ENCODE measurements at regions of chr12 and their contacts with region 1.

Region 1: GRCh38 chr12:38316391-38317129 is at the start of gene ALG10B:
- DNase-seq: peak; percentile 62 to 87 (median 73)
- ATAC-seq: peak; percentile 100
- H3K4me3 ChIP-seq: peak within 1 kb of the TSS; percentile 52
- H3K27ac ChIP-seq: peak within 1 kb of the TSS; percentile 64; the same call in 2 of the 3 replicates
- H3K4me1 ChIP-seq: no peaks in the 10 kb centered on the region
- H3K27me3 ChIP-seq: no peaks in the 10 kb centered on the region
- CTCF ChIP-seq: peak; percentile 30 to 71 (median 55); a peak in 5 of 6 replicates
- EP300 ChIP-seq: no peak
- POLR2A ChIP-seq: no peak
- RAD21 ChIP-seq: no peak
- polyA plus RNA-seq, gene ALG10B: 0.34 to 0.46 TPM

Region 2: GRCh38 chr12:38053655-38054464 is 262.7 kb before region 1 on chr12:
- CTCF ChIA-PET with region 1: no interaction called
- POLR2A ChIA-PET with region 1: no interaction called
- in situ Hi-C with region 1: no loop called
- intact Hi-C with region 1: loop called (anchors 5 kb)
- DNase-seq: peak; percentile 17 to 58 (median 20)
- ATAC-seq: peak; percentile 47
- H3K4me3 ChIP-seq: no peak overlapping the region
- H3K27ac ChIP-seq: no peak overlapping the region
- H3K4me1 ChIP-seq: no peaks in the 10 kb centered on the region
- H3K27me3 ChIP-seq: no peaks in the 10 kb centered on the region
- CTCF ChIP-seq: peak; percentile 32 to 40 (median 40); a peak in 4 of 6 replicates
- EP300 ChIP-seq: no peak
- POLR2A ChIP-seq: no peak
- RAD21 ChIP-seq: peak in 1 of 2 experiments; percentile 49; a peak in 3 of 4 replicates

Region 3: DNA sequence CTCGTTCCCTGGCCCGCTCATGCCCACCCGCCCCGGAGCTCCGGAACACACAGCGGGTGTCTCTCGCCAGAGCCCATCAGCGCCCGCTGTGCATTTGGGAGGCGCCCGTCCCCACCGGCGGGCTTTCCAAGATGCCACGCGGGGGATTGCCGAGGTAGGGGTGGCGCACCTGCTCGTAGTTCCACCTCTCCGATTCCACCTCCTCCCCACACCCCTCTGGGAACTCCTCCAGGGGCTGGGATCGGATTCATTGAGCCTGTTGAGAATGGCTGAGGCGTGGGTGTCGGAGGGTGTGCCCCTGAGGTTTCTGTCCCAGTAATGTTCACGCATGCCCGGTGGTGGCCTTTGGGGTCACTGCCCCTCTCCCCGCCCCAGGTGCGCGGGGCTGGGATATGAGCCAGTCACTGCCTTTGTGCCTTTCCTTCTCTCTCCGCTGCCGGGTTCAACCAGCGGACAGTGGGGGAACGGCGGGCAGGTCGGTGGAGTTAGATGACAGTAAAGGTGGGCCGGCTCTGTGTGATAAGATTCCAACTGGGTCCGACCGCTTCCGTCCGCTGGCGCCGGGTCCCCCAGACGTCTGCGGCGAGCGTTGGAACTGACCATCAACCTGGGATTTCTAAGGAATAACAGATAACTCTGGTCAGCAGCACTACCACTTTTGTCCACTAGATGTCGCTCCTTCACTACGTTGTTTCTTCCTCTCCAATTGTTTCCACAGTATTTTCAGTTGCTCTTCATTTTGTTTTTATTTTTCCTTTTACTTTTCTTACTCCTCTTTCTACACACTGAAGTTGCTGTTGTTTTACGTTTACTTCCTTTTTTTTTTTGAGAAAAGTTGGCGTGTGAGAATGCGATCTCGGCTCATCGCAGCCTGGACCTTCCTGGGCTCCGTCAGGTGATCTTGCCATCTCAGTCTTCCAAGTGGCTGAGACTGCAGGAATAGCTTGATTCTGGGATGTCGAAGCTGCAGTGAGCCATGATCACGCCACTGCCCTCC is 178.0 kb before region 1 on chr12:
- CTCF ChIA-PET with region 1: interaction called, 3 read pairs
- POLR2A ChIA-PET with region 1: no interaction called
- in situ Hi-C with region 1: no loop called
- intact Hi-C with region 1: loop called (anchors 1 kb)
- DNase-seq: peak; percentile 49 to 63 (median 53)
- ATAC-seq: peak; percentile 81
- H3K4me3 ChIP-seq: no peak overlapping the region
- H3K27ac ChIP-seq: no peak overlapping the region
- H3K4me1 ChIP-seq: peaks cover 0 to 4% of the 10 kb centered on the region in 2 experiments; a peak in 2 of 5 replicates
- H3K27me3 ChIP-seq: no peaks in the 10 kb centered on the region
- CTCF ChIP-seq: peak; percentile 57 to 90 (median 88)
- EP300 ChIP-seq: no peak
- POLR2A ChIP-seq: no peak
- RAD21 ChIP-seq: peak; percentile 42 to 73; a peak in 3 of 4 replicates

Region 4: GRCh38 chr12:38269897-38270296 is 46.7 kb before region 1 on chr12:
- CTCF ChIA-PET with region 1: no interaction called
- POLR2A ChIA-PET with region 1: no interaction called
- in situ Hi-C with region 1: no loop called
- intact Hi-C with region 1: no loop called
- DNase-seq: no peak
- ATAC-seq: no peak
- H3K4me3 ChIP-seq: no peak overlapping the region
- H3K27ac ChIP-seq: no peak overlapping the region
- H3K4me1 ChIP-seq: no peaks in the 10 kb centered on the region
- H3K27me3 ChIP-seq: no peaks in the 10 kb centered on the region
- CTCF ChIP-seq: no peak
- EP300 ChIP-seq: no peak
- POLR2A ChIP-seq: no peak
- RAD21 ChIP-seq: no peak

Measured in K562 (cell line).